ENCODE measurements at regions of chr15 and their contacts with region 1.

Region 1: GRCh38 chr15:69452692-69453521 is at the start of gene RPLP1:
- DNase-seq: peak; percentile 96 to 98 (median 97)
- ATAC-seq: peak; percentile 95 to 98 (median 96)
- H3K4me3 ChIP-seq: peak within 1 kb of the TSS; percentile 55 to 99 (median 87)
- H3K27ac ChIP-seq: peak within 1 kb of the TSS; percentile 75 to 97 (median 95)
- H3K4me1 ChIP-seq: peaks cover 5 to 40% (median 27%) of the 10 kb centered on the region in 12 donors
- H3K27me3 ChIP-seq: no peaks in the 10 kb centered on the region
- CTCF ChIP-seq: no peak
- POLR2A ChIP-seq: peak in 1 of 2 donors; percentile 97
- total RNA-seq, gene RPLP1: 487 to 1,482 (median 1,221) TPM

Region 2: DNA sequence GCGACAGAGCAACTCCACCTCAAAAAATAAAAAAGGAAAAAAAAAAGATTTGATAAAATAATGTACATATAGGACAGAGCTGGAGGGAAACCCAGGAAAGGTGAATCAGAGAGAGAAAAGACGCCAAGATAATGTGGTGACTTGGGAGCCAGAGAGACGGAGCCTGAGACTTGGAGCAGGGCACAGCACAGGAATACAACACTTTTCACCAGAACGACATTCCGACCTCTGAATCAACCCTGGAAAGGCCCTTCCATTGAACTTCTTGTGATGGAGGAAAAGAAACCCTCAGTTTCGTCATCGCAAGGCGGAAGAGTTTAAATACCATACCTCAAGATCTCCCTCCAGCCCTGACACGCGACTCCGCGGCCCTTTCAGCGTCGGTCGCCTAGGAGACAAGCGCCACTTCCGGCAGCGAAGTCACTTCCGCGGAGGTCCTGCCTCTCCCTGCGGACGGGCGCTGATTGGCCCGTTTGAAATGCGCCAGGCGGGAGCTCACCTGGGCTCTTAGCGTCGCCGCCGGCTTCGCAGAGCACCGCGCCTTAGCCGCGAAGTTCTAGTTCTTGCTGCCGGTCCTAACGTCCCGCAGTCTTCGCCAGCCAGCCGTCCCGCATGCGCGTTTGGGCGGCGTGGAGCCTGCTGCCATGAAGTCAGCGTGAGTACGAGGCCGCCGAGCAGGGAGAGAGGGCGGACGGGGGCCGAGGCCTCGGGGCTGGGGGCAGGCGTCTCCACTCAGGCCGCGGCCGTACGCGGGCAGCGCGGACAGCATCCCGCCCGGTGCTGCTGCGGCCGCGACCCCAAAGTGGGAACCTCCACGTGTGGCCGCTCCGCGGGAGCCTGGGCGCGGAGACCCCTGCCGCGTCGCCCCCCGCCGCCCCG is 38.8 kb before region 1 on chr15 and contains the start of gene KIF23:
- intact Hi-C with region 1: loop called in 2 of 10 experiments (anchors 5 kb)
- DNase-seq: peak; percentile 84 to 94 (median 92)
- ATAC-seq: peak; percentile 92 to 98 (median 98)
- H3K4me3 ChIP-seq: peak within 1 kb of the TSS; percentile 55 to 91 (median 79)
- H3K27ac ChIP-seq: peak within 1 kb of the TSS in 6 of 12 donors; percentile 13 to 51 (median 34)
- H3K4me1 ChIP-seq: peaks cover 0 to 15% (median 2%) of the 10 kb centered on the region in 12 donors
- H3K27me3 ChIP-seq: no peaks in the 10 kb centered on the region
- CTCF ChIP-seq: no peak
- POLR2A ChIP-seq: no peak
- total RNA-seq, gene KIF23: 0.32 to 7.7 (median 1.4) TPM in 8 of 9 donors, not detected in the other

Region 3: DNA sequence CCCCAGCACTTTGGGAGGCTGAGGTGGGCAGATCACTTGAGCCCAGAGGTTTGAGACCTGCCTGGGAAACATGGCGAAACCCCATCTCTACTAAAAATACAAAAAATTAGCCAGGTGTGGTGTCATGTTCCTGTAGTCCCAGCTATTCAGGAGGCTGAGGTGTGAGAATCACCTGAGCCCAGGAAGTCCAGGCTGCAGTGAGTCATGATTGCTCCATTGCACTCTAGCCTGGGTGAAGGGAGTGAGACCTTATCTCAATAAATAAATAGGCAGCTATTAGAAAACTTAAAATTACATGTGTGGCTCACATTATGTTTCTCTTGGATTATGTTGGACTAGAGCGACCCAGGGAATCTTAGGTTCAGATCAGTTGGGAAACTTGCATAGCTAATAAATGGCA is 69.5 kb after region 1 on chr15:
- intact Hi-C with region 1: no loop called
- DNase-seq: no peak
- ATAC-seq: no peak
- H3K4me3 ChIP-seq: no peak overlapping the region
- H3K27ac ChIP-seq: no peak overlapping the region
- H3K4me1 ChIP-seq: no peaks in the 10 kb centered on the region
- H3K27me3 ChIP-seq: peaks cover 0 to 8% (median 0%) of the 10 kb centered on the region in 9 donors
- CTCF ChIP-seq: no peak
- POLR2A ChIP-seq: no peak

Measured in heart left ventricle (tissue), 16 donors.